CD8-positive, alpha-beta T cell (primary cell): ENCODE measurements at regions of chr3 and their contacts with region 1.

Region 1: GRCh38 chr3:25594007-25594502 is 70.7 kb downstream of the TOP2B start:
- DNase-seq: peak in 2 of 9 experiments; percentile 51 to 57
- ATAC-seq: peak; percentile 62
- H3K4me3 ChIP-seq: no peak overlapping the region
- H3K4me3 Mint-ChIP-seq: no peak overlapping the region
- H3K27ac ChIP-seq: no peak overlapping the region
- H3K27ac Mint-ChIP-seq: peak overlapping the region; percentile 10
- H3K4me1 ChIP-seq: no peaks in the 10 kb centered on the region
- H3K4me1 Mint-ChIP-seq: peaks cover 3% of the 10 kb centered on the region
- H3K27me3 ChIP-seq: no peaks in the 10 kb centered on the region
- H3K27me3 Mint-ChIP-seq: no peaks in the 10 kb centered on the region
- CTCF ChIP-seq: peak; percentile 85

Region 2: GRCh38 chr3:23888617-23889228 is 1705.3 kb before region 1 on chr3:
- CTCF ChIA-PET with region 1: no interaction called
- POLR2A ChIA-PET with region 1: no interaction called
- intact Hi-C with region 1: loop called in 1 of 2 experiments (anchors 2 kb)
- DNase-seq: peak in 3 of 9 experiments; percentile 17 to 63 (median 54)
- ATAC-seq: peak; percentile 56
- H3K4me3 ChIP-seq: no peak overlapping the region
- H3K4me3 Mint-ChIP-seq: no peak overlapping the region
- H3K27ac ChIP-seq: no peak overlapping the region
- H3K27ac Mint-ChIP-seq: peak overlapping the region; percentile 47
- H3K4me1 ChIP-seq: no peaks in the 10 kb centered on the region
- H3K4me1 Mint-ChIP-seq: peaks cover 2% of the 10 kb centered on the region
- H3K27me3 ChIP-seq: no peaks in the 10 kb centered on the region
- H3K27me3 Mint-ChIP-seq: no peaks in the 10 kb centered on the region
- CTCF ChIP-seq: peak; percentile 96

Region 3: GRCh38 chr3:23999012-23999641 is 1594.9 kb before region 1 on chr3:
- CTCF ChIA-PET with region 1: no interaction called
- POLR2A ChIA-PET with region 1: no interaction called
- intact Hi-C with region 1: loop called (anchors 1 to 10 kb)
- DNase-seq: peak; percentile 22 to 64 (median 53)
- ATAC-seq: no peak
- H3K4me3 ChIP-seq: no peak overlapping the region
- H3K4me3 Mint-ChIP-seq: no peak overlapping the region
- H3K27ac ChIP-seq: no peak overlapping the region
- H3K27ac Mint-ChIP-seq: no peak overlapping the region
- H3K4me1 ChIP-seq: no peaks in the 10 kb centered on the region
- H3K4me1 Mint-ChIP-seq: no peaks in the 10 kb centered on the region
- H3K27me3 ChIP-seq: no peaks in the 10 kb centered on the region
- H3K27me3 Mint-ChIP-seq: peaks cover 4% of the 10 kb centered on the region
- CTCF ChIP-seq: peak; percentile 88

Region 4: GRCh38 chr3:24004171-24004938 is 1589.7 kb before region 1 on chr3:
- CTCF ChIA-PET with region 1: no interaction called
- POLR2A ChIA-PET with region 1: no interaction called
- intact Hi-C with region 1: loop called (anchors 1 to 10 kb)
- DNase-seq: no peak
- ATAC-seq: no peak
- H3K4me3 ChIP-seq: no peak overlapping the region
- H3K4me3 Mint-ChIP-seq: no peak overlapping the region
- H3K27ac ChIP-seq: no peak overlapping the region
- H3K27ac Mint-ChIP-seq: no peak overlapping the region
- H3K4me1 ChIP-seq: no peaks in the 10 kb centered on the region
- H3K4me1 Mint-ChIP-seq: no peaks in the 10 kb centered on the region
- H3K27me3 ChIP-seq: no peaks in the 10 kb centered on the region
- H3K27me3 Mint-ChIP-seq: no peaks in the 10 kb centered on the region
- CTCF ChIP-seq: no peak

Region 5: GRCh38 chr3:24185738-24186384 is 1408.2 kb before region 1 on chr3:
- CTCF ChIA-PET with region 1: no interaction called
- POLR2A ChIA-PET with region 1: no interaction called
- intact Hi-C with region 1: loop called in 1 of 2 experiments (anchors 2 kb)
- DNase-seq: peak in 3 of 9 experiments; percentile 19 to 38 (median 21)
- ATAC-seq: no peak
- H3K4me3 ChIP-seq: no peak overlapping the region
- H3K4me3 Mint-ChIP-seq: no peak overlapping the region
- H3K27ac ChIP-seq: no peak overlapping the region
- H3K27ac Mint-ChIP-seq: no peak overlapping the region
- H3K4me1 ChIP-seq: no peaks in the 10 kb centered on the region
- H3K4me1 Mint-ChIP-seq: no peaks in the 10 kb centered on the region
- H3K27me3 ChIP-seq: no peaks in the 10 kb centered on the region
- H3K27me3 Mint-ChIP-seq: no peaks in the 10 kb centered on the region
- CTCF ChIP-seq: peak; percentile 43

Region 6: DNA sequence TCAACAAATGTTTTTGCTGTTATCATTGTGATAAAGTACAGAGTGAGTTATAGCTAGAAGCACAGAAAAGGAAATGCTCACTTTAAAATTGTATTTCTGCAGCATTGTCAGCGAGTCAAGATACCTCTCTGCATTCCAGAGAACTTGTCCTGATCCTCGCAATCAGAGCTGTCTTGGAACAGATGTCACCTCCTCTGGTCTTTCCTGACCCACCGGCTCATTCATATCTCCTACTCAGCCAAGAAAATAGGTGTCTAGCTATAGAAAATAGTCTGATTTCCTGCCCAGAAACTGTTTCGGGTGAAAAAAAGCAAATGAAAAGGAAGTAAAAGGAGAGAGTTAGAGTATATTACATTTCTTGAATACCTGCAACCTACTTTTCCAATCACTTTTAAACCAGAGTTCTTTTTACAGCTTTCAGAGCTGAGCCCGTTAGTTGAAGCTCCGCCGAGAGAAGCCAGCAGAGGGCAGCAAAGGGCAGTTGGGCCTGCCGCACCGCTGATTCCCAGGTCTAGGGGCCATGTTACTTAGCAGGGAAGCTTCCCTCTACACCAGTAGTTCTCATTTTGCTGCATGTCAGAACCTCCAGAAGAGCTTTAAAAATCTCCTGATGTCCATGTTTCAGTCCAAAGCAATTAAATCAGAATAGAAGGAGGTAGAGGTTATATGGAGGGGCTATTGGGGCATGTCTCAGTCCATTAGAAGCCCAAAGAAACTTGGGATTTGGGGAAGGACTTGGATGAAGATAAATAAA is 913.7 kb before region 1 on chr3:
- CTCF ChIA-PET with region 1: no interaction called
- POLR2A ChIA-PET with region 1: no interaction called
- intact Hi-C with region 1: loop called in 1 of 2 experiments (anchors 10 kb)
- DNase-seq: peak in 5 of 9 experiments; percentile 13 to 48 (median 24)
- ATAC-seq: no peak
- H3K4me3 ChIP-seq: no peak overlapping the region
- H3K4me3 Mint-ChIP-seq: no peak overlapping the region
- H3K27ac ChIP-seq: no peak overlapping the region
- H3K27ac Mint-ChIP-seq: no peak overlapping the region
- H3K4me1 ChIP-seq: no peaks in the 10 kb centered on the region
- H3K4me1 Mint-ChIP-seq: no peaks in the 10 kb centered on the region
- H3K27me3 ChIP-seq: no peaks in the 10 kb centered on the region
- H3K27me3 Mint-ChIP-seq: no peaks in the 10 kb centered on the region
- CTCF ChIP-seq: no peak

Region 7: GRCh38 chr3:25604107-25604805 is 10.2 kb after region 1 on chr3:
- CTCF ChIA-PET with region 1: interaction called, 18 read pairs
- POLR2A ChIA-PET with region 1: no interaction called
- intact Hi-C with region 1: no loop called
- DNase-seq: peak in 1 of 9 experiments; percentile 15
- ATAC-seq: no peak
- H3K4me3 ChIP-seq: no peak overlapping the region
- H3K4me3 Mint-ChIP-seq: no peak overlapping the region
- H3K27ac ChIP-seq: no peak overlapping the region
- H3K27ac Mint-ChIP-seq: peak overlapping the region; percentile 32
- H3K4me1 ChIP-seq: no peaks in the 10 kb centered on the region
- H3K4me1 Mint-ChIP-seq: peaks cover 2% of the 10 kb centered on the region
- H3K27me3 ChIP-seq: no peaks in the 10 kb centered on the region
- H3K27me3 Mint-ChIP-seq: no peaks in the 10 kb centered on the region
- CTCF ChIP-seq: no peak